Right ventricle myocardium inferior (tissue), 1 donor: ENCODE measurements at regions of chr11 and their contacts with region 1.

Region 1: GRCh38 chr11:76680518-76681425 is 10.2 kb upstream of the LRRC32 start:
- DNase-seq: peak; percentile 70
- ATAC-seq: peak; percentile 76

Region 2: DNA sequence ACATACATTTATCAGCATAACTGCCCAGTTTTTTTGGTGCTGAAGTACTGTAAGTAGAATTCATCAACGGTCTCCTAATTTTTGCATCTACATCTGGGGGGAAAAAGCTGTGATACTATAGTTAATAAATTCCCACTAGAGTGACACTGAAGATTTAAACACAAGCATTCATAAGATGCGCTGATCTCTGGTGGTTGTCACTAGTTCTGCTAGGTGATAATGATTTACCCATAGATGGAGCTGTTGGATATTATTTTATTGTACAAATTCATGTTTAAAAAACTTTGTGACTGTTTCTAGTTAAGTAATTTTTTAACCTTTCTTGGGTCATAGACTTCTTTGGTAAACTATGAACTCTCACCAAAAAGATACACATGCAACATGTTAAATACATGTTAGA is 129.4 kb before region 1 on chr11:
- intact Hi-C with region 1: loop called (anchors 2 kb)
- DNase-seq: no peak
- ATAC-seq: no peak

Region 3: DNA sequence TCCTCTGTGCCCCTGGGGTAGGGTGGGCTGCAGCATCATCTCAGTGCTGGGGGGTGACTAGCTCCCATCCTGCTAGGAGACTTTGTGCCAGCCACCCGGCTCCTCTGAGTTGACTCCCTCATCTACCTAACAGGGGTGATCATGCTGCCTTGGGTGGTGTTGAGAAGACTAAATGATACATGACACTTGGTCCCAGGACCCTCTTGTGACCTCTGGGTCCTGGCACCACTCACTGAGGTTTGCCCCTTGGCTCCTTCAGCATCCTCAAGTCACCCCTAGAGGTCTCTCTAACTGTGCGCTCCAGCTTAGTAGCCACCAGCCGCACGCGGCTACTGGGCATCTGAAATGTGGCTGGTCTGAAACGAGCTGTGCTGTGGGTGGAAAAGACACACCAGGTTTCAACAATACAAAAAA is 82.3 kb before region 1 on chr11:
- intact Hi-C with region 1: loop called (anchors 1 kb)
- DNase-seq: no peak
- ATAC-seq: peak; percentile 33

Region 4: DNA sequence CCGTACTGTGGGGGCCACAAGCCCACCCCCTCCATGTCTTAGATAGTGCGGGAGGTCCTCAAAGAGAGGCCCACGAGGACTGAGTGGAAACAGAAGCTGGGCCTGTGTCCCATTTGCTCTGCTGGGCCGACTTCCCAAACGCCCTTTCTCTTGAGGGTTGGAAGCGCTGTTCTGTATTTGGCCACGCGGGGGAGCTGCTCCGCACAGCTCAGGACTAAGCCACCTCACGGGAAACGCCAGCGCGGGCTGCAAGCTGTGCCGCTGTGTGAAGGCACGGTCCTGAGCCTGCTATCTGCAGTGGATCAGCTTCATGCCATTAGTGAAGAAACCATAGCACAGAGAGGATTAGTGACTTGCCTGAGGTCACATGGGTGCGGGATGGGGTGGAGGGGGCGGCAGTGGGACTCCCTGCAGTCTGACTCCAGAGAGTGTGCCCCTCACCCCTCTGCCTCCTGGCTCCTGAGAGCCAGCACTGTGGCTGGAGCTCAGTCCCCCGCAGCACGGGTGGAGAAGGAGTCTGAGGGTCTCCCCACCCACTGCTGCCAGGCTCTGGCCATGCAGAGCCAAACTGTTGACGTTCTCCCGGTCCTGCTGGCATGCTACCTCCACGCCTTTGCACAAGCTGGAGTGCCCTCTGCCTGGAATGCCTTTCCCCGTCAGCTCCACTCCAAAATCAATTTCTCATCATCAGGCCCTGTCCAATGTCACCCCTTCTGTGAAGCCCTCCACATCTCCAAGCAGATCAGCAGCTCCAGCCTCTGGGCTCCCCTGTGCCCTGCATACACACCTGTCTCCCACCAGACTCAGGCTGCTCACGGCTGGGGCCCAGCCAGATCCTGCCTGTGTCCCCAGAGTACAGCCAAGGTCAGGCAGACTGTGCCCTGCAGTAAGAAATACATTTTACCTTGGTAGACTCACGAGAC is 41.2 kb after region 1 on chr11:
- intact Hi-C with region 1: no loop called
- DNase-seq: peak; percentile 90
- ATAC-seq: peak; percentile 92